Thyroid gland (tissue), 4 donors: ENCODE measurements at regions of chr1 and their contacts with region 1.

Region 1: GRCh38 chr1:24688621-24689195 is 45.6 kb downstream of the SRRM1 start:
- DNase-seq: peak; percentile 68 to 71
- H3K4me3 ChIP-seq: no peak overlapping the region
- H3K27ac ChIP-seq: no peak overlapping the region
- H3K4me1 ChIP-seq: peaks cover 0 to 4% of the 10 kb centered on the region in 2 donors
- H3K27me3 ChIP-seq: no peaks in the 10 kb centered on the region
- CTCF ChIP-seq: peak in 5 of 6 experiments; percentile 38 to 87 (median 79)
- POLR2A ChIP-seq: no peak

Region 2: DNA sequence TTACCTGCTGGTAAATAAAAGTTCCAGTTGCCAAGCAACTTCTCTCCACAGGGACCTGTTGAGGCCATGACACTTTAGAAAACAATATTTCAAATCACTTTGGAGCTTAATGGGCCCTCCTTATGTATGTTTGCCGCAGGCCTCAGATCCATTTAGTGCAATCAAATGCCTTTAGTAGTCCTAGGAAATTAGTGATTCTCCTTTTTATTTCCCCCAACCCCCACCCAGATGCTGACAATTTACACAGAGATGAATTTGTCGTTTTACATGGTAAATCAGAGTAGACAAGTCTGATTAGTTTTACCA is 140.1 kb after region 1 on chr1:
- intact Hi-C with region 1: loop called (anchors 2 kb)
- DNase-seq: no peak
- H3K4me3 ChIP-seq: no peak overlapping the region
- H3K27ac ChIP-seq: no peak overlapping the region
- H3K4me1 ChIP-seq: peaks cover 0 to 8% of the 10 kb centered on the region in 2 donors
- H3K27me3 ChIP-seq: no peaks in the 10 kb centered on the region
- CTCF ChIP-seq: no peak
- POLR2A ChIP-seq: no peak

Region 3: DNA sequence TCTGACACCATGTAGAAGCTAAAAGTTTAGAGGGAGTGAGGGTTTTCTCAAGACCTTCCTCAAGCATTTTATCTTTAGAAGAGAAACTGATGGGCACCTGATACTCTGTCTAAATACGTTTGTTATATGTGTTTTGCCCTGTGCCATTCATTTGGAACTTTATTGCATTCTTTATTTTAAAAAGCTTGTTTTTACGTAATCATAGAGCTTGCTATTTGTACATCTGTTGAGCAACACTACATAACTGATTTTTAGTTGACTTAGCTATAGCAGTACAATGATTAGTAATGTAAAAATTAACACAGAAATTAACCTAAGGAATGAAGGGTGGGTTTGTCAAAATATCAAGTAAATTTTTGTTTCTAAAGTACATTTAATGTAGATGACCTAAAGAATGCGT is 152.9 kb after region 1 on chr1:
- intact Hi-C with region 1: loop called (anchors 2 kb)
- DNase-seq: no peak
- H3K4me3 ChIP-seq: no peak overlapping the region
- H3K27ac ChIP-seq: no peak overlapping the region
- H3K4me1 ChIP-seq: no peaks in the 10 kb centered on the region
- H3K27me3 ChIP-seq: no peaks in the 10 kb centered on the region
- CTCF ChIP-seq: no peak
- POLR2A ChIP-seq: no peak